ENCODE measurements at regions of chr18 and their contacts with region 1.

Region 1: GRCh38 chr18:68548904-68549871 is 165.7 kb downstream of the TMX3 start:
- DNase-seq: no peak
- ATAC-seq: no peak
- H3K4me3 ChIP-seq: no peak overlapping the region
- H3K4me3 Mint-ChIP-seq: no peak overlapping the region
- H3K27ac ChIP-seq: no peak overlapping the region
- H3K27ac Mint-ChIP-seq: no peak overlapping the region
- H3K4me1 ChIP-seq: no peaks in the 10 kb centered on the region
- H3K4me1 Mint-ChIP-seq: no peaks in the 10 kb centered on the region
- H3K27me3 ChIP-seq: peaks cover 0 to 2% of the 10 kb centered on the region in 2 experiments
- H3K27me3 Mint-ChIP-seq: peaks cover 2% of the 10 kb centered on the region
- CTCF ChIP-seq: no peak

Region 2: DNA sequence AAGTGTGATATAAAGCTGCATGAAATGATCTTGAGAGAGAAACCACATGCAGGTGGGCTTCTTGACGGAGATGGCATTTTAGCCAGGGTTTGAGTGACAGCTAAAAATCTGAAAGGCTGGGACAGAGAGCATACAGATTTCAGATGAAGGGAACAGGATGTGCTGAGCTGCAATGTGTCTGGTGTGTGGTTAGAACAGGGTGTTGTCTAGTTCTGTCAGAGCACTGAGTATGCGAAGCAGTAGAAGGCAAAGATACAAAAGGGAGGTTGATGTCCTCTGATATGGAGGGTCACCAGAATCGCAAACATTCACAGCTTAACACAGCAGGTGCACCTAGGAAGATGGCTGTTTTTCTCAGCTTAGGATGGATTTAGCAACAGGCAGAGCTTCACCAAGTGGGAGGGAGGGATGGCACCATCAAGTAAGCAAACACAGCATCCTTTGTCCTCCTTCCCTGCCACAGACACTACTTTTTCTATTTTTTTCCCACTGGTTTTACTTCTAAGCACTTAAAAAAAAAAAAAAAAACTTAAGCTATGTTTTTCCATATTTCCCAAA is 16.8 kb before region 1 on chr18:
- CTCF ChIA-PET with region 1: no interaction called
- POLR2A ChIA-PET with region 1: no interaction called
- intact Hi-C with region 1: loop called in 1 of 2 experiments (anchors 2 kb)
- DNase-seq: peak in 2 of 9 experiments; percentile 2
- ATAC-seq: no peak
- H3K4me3 ChIP-seq: no peak overlapping the region
- H3K4me3 Mint-ChIP-seq: no peak overlapping the region
- H3K27ac ChIP-seq: no peak overlapping the region
- H3K27ac Mint-ChIP-seq: no peak overlapping the region
- H3K4me1 ChIP-seq: no peaks in the 10 kb centered on the region
- H3K4me1 Mint-ChIP-seq: no peaks in the 10 kb centered on the region
- H3K27me3 ChIP-seq: no peaks in the 10 kb centered on the region
- H3K27me3 Mint-ChIP-seq: no peaks in the 10 kb centered on the region
- CTCF ChIP-seq: no peak

Region 3: DNA sequence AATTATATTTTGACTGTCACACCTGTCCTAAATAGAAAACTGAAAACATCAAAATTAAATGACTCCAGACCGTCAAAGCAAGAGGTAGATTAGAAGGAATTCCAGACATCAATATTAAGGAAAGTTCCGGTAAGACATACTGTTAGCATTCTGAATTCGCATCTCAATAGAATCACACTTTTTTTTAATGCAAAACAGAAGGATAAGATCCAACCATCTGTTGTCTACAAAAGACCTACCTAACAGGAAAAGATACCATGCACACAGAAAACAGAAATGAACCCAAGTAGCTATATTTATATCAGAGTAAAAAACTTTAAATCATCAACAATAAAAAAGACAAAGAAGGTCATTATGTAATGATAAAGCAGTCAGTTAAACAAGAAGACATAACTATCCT is 20.7 kb after region 1 on chr18:
- CTCF ChIA-PET with region 1: no interaction called
- POLR2A ChIA-PET with region 1: no interaction called
- intact Hi-C with region 1: no loop called
- DNase-seq: no peak
- ATAC-seq: no peak
- H3K4me3 ChIP-seq: no peak overlapping the region
- H3K4me3 Mint-ChIP-seq: no peak overlapping the region
- H3K27ac ChIP-seq: no peak overlapping the region
- H3K27ac Mint-ChIP-seq: no peak overlapping the region
- H3K4me1 ChIP-seq: no peaks in the 10 kb centered on the region
- H3K4me1 Mint-ChIP-seq: no peaks in the 10 kb centered on the region
- H3K27me3 ChIP-seq: no peaks in the 10 kb centered on the region
- H3K27me3 Mint-ChIP-seq: peaks cover 5% of the 10 kb centered on the region
- CTCF ChIP-seq: no peak

Measured in CD8-positive, alpha-beta T cell (primary cell).